Activated CD4-positive, alpha-beta T cell treated with anti-CD3 and anti-CD28 coated beads for 36 hours (primary cell): ENCODE measurements at regions of chr6 and their contacts with region 1.

Region 1: DNA sequence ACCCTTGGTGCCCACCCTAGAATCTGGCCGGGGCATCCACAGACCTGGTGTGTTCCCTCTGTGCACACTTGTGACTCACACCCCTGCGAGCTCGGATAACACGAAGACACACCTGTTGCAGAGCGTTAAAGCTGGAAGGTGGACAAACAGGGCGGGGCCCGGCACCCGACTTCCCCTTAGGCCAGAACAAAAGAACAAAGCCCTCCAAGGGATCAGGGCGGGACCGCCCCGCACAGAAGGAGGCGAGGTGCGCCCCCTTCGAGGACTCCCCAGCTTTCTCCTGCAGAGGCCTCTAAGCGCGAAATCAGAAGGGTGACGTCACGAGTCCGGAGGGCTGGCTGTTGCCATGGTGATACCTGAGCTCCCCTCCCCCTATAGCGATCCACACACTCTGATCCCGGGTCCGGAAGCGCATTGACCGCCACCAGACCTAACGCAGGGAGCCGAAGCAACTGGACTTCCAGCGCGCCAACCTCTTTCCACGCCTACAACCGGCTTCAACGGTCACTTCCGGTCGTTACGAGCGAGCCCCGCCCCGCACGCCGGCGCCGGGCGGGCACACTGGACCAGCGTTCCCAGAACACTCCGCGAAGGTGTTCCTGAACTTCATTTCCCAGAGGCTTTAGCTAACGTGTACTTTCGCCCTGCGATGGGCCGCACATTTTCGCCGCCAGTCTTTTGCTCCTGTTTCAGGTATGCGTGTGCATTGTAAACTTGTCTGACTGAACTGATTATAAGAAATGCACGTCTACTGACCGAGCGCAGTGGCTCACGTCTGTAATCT is at the start of gene ZNF184:
- DNase-seq: peak; percentile 91
- ATAC-seq: peak; percentile 83
- H3K4me3 Mint-ChIP-seq: peak within 1 kb of the TSS; percentile 84
- H3K27ac Mint-ChIP-seq: peak within 1 kb of the TSS; percentile 97
- H3K4me1 Mint-ChIP-seq: peaks cover 44% of the 10 kb centered on the region
- H3K27me3 Mint-ChIP-seq: no peaks in the 10 kb centered on the region
- total RNA-seq, gene ZNF184: 11.8 to 14.5 TPM

Region 2: GRCh38 chr6:27237089-27237803 is 235.6 kb before region 1 on chr6:
- CTCF ChIA-PET with region 1: no interaction called
- POLR2A ChIA-PET with region 1: no interaction called
- intact Hi-C with region 1: loop called in 1 of 2 experiments (anchors 5 kb)
- DNase-seq: peak; percentile 83
- ATAC-seq: peak; percentile 60
- H3K4me3 Mint-ChIP-seq: peak overlapping the region; percentile 54
- H3K27ac Mint-ChIP-seq: no peak overlapping the region
- H3K4me1 Mint-ChIP-seq: peaks cover 24% of the 10 kb centered on the region
- H3K27me3 Mint-ChIP-seq: peaks cover 63% of the 10 kb centered on the region

Region 3: GRCh38 chr6:27359231-27359630 is 113.6 kb before region 1 on chr6:
- CTCF ChIA-PET with region 1: no interaction called
- POLR2A ChIA-PET with region 1: no interaction called
- intact Hi-C with region 1: no loop called
- DNase-seq: no peak
- ATAC-seq: no peak
- H3K4me3 Mint-ChIP-seq: no peak overlapping the region
- H3K27ac Mint-ChIP-seq: no peak overlapping the region
- H3K4me1 Mint-ChIP-seq: no peaks in the 10 kb centered on the region
- H3K27me3 Mint-ChIP-seq: no peaks in the 10 kb centered on the region

Region 4: DNA sequence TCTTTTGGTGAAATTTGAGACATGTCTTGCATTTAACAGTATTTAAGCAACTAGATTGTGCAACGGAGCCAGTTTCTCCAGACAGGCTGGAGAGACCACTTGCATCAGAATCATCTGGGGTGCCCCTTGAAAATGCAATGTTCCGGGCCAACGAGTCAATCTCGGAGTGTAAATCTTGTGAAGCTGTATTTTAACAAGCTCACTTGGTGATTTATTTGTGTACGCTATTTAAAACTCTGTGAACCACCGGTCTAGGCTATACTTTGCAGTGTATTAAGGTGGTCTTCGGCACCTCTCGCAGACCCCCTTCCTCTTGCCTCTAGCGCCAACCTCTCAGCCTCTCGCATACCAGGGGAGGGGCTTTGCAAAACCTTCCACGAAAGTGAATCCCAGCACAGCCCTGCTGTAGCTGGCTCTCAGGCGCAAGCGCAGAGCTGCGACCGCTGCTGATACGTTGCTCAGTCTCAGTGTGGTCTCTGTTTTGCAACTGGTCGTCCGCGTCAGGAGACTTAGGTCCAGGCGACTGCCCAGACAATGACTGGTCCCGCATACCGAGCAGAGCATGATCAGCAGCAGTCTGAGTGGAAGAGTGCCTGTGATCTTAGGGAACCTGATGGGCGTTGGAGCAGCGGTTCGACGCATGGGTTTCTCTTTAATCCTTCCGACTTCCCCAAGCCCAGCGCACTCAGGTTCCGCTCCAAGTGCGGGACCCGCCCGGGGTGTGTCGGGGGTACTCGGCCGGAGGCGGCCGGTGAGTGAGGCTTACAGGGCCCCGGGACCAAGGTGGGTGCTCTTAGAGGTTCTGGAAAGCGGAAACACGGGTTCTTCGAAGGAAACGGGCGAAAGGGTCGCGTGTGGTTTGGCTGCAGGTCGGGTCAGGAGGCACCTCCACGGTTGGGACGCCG is 84.3 kb before region 1 on chr6 and contains the start of gene ZNF391:
- CTCF ChIA-PET with region 1: no interaction called
- POLR2A ChIA-PET with region 1: interaction called, 3 read pairs
- intact Hi-C with region 1: loop called (anchors 1 kb)
- DNase-seq: peak; percentile 81
- ATAC-seq: peak; percentile 95
- H3K4me3 Mint-ChIP-seq: peak within 1 kb of the TSS; percentile 95
- H3K27ac Mint-ChIP-seq: peak within 1 kb of the TSS; percentile 93
- H3K4me1 Mint-ChIP-seq: peaks cover 14% of the 10 kb centered on the region
- H3K27me3 Mint-ChIP-seq: peaks cover 6% of the 10 kb centered on the region
- total RNA-seq, gene ZNF391: 4.3 to 6.2 TPM

Region 5: GRCh38 chr6:27441001-27441400 is 31.8 kb before region 1 on chr6:
- CTCF ChIA-PET with region 1: no interaction called
- POLR2A ChIA-PET with region 1: no interaction called
- intact Hi-C with region 1: no loop called
- DNase-seq: no peak
- ATAC-seq: no peak
- H3K4me3 Mint-ChIP-seq: no peak overlapping the region
- H3K27ac Mint-ChIP-seq: no peak overlapping the region
- H3K4me1 Mint-ChIP-seq: no peaks in the 10 kb centered on the region
- H3K27me3 Mint-ChIP-seq: peaks cover 4% of the 10 kb centered on the region